Colonic mucosa (tissue), 4 donors: ENCODE measurements at regions of chr9 and their contacts with region 1.

Region 1: DNA sequence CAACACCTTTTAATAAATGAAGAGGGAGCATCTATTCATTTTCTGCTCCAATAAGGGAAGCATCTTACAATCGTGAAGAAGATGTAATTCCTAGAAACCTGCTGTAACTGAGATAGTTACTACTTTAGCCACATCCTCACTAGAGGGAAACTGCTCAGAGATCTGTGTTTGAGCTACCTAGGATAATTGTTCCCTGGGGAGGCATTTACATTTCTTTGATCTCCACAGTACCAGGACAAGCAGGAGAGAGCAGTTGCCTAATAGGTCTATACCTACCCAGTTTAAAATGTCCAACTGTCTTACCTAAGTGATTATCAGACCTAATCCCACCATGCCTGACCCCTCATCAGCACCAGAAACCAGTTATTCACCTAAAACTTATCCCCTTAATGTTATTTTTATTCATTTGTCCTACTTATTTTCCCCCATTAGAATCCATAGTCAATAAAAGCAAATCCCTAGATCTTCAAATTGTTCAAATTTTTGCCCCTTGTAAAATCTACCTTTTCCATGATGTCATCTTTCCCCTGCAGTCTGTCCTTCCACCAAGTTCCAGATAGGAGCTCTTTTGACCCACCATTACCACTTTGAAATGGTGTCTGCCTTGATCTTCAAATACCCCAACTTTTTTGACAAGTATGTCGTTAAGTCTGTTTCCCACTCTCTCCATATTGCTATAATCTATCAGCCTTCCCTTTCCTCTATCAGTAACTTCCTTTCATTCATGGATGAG is 196.7 kb downstream of the TUSC1 start:
- DNase-seq: no peak
- H3K4me3 ChIP-seq: no peak overlapping the region
- H3K27ac ChIP-seq: no peak overlapping the region
- H3K4me1 ChIP-seq: no peaks in the 10 kb centered on the region
- H3K27me3 ChIP-seq: no peaks in the 10 kb centered on the region
- CTCF ChIP-seq: no peak

Region 2: GRCh38 chr9:25427898-25428297 is 53.6 kb before region 1 on chr9:
- intact Hi-C with region 1: loop called (anchors 5 kb)
- DNase-seq: no peak
- H3K4me3 ChIP-seq: no peak overlapping the region
- H3K27ac ChIP-seq: no peak overlapping the region
- H3K4me1 ChIP-seq: no peaks in the 10 kb centered on the region
- H3K27me3 ChIP-seq: no peaks in the 10 kb centered on the region
- CTCF ChIP-seq: no peak